ENCODE measurements at regions of chr11 and their contacts with region 1.

Region 1: GRCh38 chr11:61332797-61333549 is at the starts of genes DDB1 and TKFC:
- DNase-seq: peak; percentile 99
- ATAC-seq: peak; percentile 94
- H3K4me3 Mint-ChIP-seq: peak within 1 kb of the TSS; percentile 97
- H3K27ac Mint-ChIP-seq: peak within 1 kb of the TSS; percentile 100
- H3K4me1 Mint-ChIP-seq: peaks cover 64% of the 10 kb centered on the region
- H3K27me3 Mint-ChIP-seq: no peaks in the 10 kb centered on the region
- total RNA-seq, gene DDB1: 258 to 268 TPM
- total RNA-seq, gene TKFC: 100 to 107 TPM

Region 2: DNA sequence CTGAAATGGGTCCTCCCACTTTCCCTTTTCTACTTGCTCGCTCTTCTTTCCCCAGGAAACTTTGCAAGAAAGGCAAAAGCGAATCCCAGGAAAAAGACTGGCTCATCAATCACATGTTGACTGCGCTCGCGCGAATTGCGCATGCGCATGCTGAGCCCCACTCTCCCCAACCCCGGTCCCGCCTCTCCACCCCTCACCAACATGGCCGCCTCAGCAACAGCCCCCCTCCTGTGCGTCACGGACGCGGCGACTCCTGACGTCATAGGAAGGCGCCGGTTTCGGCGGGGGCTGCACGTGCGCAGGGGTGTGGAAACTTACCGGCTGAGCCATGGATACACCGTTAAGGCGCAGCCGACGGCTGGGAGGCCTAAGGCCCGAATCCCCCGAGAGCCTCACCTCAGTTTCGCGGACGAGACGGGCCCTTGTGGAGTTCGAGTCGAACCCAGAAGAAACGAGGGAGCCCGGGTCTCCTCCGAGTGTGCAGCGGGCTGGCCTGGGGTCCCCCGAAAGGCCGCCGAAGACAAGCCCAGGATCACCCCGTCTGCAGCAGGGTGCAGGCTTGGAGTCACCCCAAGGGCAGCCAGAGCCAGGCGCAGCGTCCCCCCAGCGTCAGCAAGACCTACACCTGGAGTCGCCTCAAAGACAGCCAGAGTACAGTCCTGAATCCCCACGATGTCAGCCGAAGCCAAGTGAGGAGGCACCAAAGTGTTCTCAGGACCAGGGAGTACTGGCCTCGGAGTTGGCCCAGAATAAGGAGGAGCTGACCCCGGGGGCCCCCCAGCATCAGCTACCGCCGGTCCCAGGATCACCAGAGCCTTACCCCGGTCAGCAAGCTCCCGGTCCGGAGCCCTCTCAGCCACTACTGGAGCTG is 490.9 kb before region 1 on chr11 and contains the start of gene CCDC86:
- CTCF ChIA-PET with region 1: no interaction called
- POLR2A ChIA-PET with region 1: no interaction called
- intact Hi-C with region 1: loop called in 1 of 2 experiments (anchors 1 kb)
- DNase-seq: peak; percentile 98
- ATAC-seq: peak; percentile 95
- H3K4me3 Mint-ChIP-seq: peak within 1 kb of the TSS; percentile 83
- H3K27ac Mint-ChIP-seq: peak within 1 kb of the TSS; percentile 96
- H3K4me1 Mint-ChIP-seq: peaks cover 38% of the 10 kb centered on the region
- H3K27me3 Mint-ChIP-seq: no peaks in the 10 kb centered on the region
- total RNA-seq, gene CCDC86: 52.1 to 75.1 TPM

Region 3: DNA sequence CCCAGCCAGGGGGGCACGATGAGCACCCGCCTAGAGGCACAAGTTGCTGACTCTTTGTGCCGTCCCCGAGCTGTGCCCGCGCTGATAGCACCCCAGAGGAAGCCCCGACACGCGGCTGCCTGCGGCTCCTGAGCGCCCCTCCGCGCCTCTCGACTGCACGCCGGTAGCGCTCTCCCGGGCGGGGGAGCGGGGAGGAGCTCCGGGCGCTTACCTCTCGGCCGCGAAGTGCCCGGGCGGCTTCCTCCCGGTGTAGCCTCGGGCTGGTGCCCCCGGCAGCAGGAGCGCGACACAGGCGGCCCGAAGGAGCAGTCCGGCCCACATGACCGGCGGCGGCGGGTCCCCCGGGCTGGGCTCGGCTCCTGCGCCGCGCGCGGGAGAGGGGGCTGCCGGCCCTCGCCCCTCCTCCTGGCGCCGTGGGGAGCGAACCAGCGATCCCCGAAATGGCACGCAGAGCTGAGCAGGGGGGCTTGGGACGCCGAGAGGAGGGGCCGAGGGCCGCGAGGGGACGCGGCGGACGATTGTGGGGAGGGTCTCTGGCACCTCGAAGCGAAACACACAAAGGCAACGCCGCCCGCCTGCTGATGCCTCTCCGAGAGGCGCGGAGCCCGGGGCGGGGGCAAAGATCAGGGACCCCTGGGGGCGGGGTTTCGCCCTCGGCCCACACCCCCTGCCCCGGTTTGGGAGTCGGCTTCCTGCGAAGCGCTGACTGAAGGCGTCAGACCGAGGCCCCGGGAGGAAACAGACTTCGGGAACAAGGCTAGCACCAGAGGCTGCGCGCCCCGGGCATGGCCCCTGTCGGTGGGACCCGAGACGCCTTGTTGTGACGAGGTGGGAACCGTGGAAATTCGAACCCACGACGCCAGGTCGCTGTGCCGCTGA is 38.0 kb before region 1 on chr11 and contains the start of gene VWCE:
- CTCF ChIA-PET with region 1: interaction called, 9 read pairs
- POLR2A ChIA-PET with region 1: no interaction called
- intact Hi-C with region 1: loop called in 1 of 2 experiments (anchors 1 kb)
- DNase-seq: peak; percentile 89
- ATAC-seq: peak; percentile 90
- H3K4me3 Mint-ChIP-seq: peak within 1 kb of the TSS; percentile 80
- H3K27ac Mint-ChIP-seq: peak within 1 kb of the TSS; percentile 72
- H3K4me1 Mint-ChIP-seq: peaks cover 33% of the 10 kb centered on the region
- H3K27me3 Mint-ChIP-seq: peaks cover 14% of the 10 kb centered on the region
- total RNA-seq, gene VWCE: 5.2 to 6.8 TPM

Region 4: DNA sequence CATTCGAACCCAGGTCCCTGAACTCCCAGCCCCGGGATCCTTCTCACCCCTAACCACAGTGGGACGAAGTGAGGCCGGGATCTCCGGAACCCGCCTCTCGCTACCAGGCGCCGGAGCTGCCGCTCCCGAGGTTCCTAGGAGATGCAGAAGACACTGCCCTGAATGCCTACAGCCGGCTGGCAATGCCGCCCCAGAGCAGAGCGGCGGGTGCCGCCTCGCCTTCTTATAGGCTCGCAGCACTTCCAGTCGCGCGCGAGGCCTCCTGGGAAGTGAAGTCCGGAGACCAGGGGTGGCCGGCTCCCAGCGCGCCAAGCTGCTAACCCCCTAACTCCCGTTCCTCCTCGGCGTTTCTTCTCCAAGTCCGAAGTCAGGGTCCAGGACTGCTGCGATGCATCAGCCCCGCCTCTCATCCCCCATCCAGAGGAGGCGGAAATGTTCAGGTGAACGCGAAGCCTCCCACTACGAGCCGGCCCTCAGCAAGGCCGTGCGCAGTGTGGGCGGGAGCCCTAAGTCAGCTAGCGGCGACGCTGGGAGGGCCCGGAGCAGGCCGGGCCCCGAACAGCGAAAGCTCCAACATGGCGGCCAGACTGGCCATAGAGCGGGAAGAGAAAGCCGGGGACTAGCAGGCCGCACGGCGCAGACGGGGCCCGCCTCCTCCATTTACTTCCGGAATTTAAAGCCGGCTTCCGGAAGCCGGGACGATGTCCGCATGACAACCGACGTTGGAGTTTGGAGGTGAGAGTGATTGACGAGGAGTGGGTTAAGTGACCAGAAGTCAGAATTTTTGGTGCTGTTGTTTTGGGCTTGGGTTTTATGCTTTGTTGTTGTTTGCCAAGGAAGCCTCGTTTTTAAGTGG is 28.9 kb after region 1 on chr11 and contains the starts of genes CYB561A3 and TMEM138:
- CTCF ChIA-PET with region 1: interaction called, 45 read pairs
- POLR2A ChIA-PET with region 1: interaction called, 26 read pairs
- intact Hi-C with region 1: loop called (anchors 1 kb)
- DNase-seq: peak; percentile 95
- ATAC-seq: peak; percentile 96
- H3K4me3 Mint-ChIP-seq: peak within 1 kb of the TSS; percentile 100
- H3K27ac Mint-ChIP-seq: peak within 1 kb of the TSS; percentile 100
- H3K4me1 Mint-ChIP-seq: peaks cover 34% of the 10 kb centered on the region
- H3K27me3 Mint-ChIP-seq: no peaks in the 10 kb centered on the region
- total RNA-seq, gene CYB561A3: 31.8 to 34.4 TPM
- total RNA-seq, gene TMEM138: 38.6 to 56.5 TPM

Region 5: GRCh38 chr11:61392981-61393595 is 60.1 kb after region 1 on chr11:
- CTCF ChIA-PET with region 1: interaction called, 33 read pairs
- POLR2A ChIA-PET with region 1: interaction called, 4 read pairs
- intact Hi-C with region 1: loop called (anchors 1 to 2 kb)
- DNase-seq: peak; percentile 35
- ATAC-seq: peak; percentile 50
- H3K4me3 Mint-ChIP-seq: peak overlapping the region; percentile 84
- H3K27ac Mint-ChIP-seq: peak overlapping the region; percentile 87
- H3K4me1 Mint-ChIP-seq: peaks cover 19% of the 10 kb centered on the region
- H3K27me3 Mint-ChIP-seq: no peaks in the 10 kb centered on the region

Region 6: DNA sequence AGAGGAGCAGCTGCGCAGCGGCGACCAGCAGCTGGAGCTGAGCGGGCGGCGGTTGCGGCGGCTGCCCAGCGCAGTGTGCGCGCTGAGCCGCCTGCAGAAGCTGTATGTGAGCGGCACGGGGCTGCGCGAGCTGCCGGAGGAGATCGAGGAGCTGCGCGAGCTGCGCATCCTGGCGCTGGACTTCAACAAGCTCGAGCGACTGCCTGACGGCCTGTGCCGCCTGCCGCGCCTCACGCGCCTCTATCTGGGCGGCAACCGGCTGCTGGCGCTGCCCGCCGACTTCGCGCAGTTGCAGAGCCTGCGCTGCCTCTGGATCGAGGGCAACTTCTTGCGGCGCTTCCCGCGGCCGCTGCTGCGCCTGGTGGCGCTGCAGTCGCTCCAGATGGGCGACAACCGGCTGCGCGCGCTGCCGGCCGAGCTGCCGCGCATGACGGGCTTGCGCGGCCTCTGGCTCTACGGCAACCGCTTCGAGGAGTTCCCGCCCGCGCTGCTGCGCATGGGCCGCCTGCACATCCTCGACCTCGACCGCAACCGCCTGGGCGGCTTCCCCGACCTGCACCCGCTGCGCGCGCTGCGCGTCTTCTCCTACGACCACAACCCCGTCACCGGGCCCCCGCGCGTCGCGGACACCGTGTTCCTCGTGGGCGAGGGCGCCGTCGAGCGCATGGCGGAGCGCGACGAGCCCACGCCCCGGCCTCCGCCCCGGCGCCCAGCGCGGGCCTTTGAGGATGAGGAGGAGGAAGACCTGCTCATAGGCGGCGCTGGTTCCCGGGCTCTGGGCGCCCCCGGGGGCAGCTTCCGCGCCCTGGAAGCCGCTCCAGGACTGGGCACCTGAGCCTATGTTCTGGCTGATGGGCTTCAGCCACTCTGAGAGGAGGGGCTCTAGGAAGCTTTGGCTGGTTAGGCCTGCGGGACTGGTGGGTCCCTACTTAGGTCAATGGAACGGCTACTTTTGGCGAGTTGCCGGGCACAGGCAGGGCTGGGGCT is 176.4 kb after region 1 on chr11:
- CTCF ChIA-PET with region 1: interaction called, 4 read pairs
- POLR2A ChIA-PET with region 1: no interaction called
- intact Hi-C with region 1: loop called in 1 of 2 experiments (anchors 2 kb)
- DNase-seq: peak; percentile 88
- ATAC-seq: peak; percentile 94
- H3K4me3 Mint-ChIP-seq: no peak overlapping the region
- H3K27ac Mint-ChIP-seq: no peak overlapping the region
- H3K4me1 Mint-ChIP-seq: peaks cover 6% of the 10 kb centered on the region
- H3K27me3 Mint-ChIP-seq: peaks cover 41% of the 10 kb centered on the region

Region 7: GRCh38 chr11:62123669-62124185 is 790.8 kb after region 1 on chr11 and contains the start of gene INCENP:
- CTCF ChIA-PET with region 1: no interaction called
- POLR2A ChIA-PET with region 1: no interaction called
- intact Hi-C with region 1: loop called in 1 of 2 experiments (anchors 10 kb)
- DNase-seq: peak; percentile 97
- ATAC-seq: peak; percentile 98
- H3K4me3 Mint-ChIP-seq: peak within 1 kb of the TSS; percentile 98
- H3K27ac Mint-ChIP-seq: peak within 1 kb of the TSS; percentile 90
- H3K4me1 Mint-ChIP-seq: peaks cover 29% of the 10 kb centered on the region
- H3K27me3 Mint-ChIP-seq: no peaks in the 10 kb centered on the region
- total RNA-seq, gene INCENP: 125 to 140 TPM